ENCODE measurements at regions of chr7 and their contacts with region 1.

Region 1: GRCh38 chr7:15751191-15751701 is 64.8 kb upstream of the MEOX2 start:
- DNase-seq: no peak
- H3K4me3 ChIP-seq: no peak overlapping the region
- H3K27ac ChIP-seq: peak overlapping the region; percentile 67 to 72
- H3K4me1 ChIP-seq: peaks cover 0 to 33% of the 10 kb centered on the region in 2 donors
- H3K27me3 ChIP-seq: no peaks in the 10 kb centered on the region
- CTCF ChIP-seq: no peak

Region 2: DNA sequence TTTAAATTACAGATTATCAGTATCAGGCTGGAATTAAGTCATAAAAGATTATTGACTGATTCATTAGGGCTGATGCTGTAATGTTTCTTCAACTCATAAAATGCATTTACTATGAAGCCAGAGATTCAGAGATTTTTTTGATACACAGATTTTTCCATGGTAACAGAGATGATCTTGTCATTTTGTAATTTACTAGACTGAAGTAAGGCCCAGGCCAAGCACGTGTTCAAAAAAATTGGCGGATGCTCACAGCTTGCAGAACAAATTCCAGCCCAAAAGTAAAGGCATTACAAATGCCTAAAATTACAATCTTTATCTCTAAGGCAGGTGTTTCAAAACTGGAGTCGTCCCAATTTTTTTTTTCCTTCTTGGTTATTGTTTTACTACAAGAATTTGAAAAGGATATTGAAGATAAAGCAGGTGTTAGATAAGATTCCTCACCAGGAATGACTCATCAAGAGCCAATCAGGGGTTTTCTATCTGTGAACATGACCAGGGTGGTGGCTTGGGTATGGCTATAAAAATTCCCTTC is 13.7 kb after region 1 on chr7:
- intact Hi-C with region 1: no loop called
- DNase-seq: no peak
- H3K4me3 ChIP-seq: no peak overlapping the region
- H3K27ac ChIP-seq: peak overlapping the region in 1 of 2 donors; percentile 4
- H3K4me1 ChIP-seq: no peaks in the 10 kb centered on the region
- H3K27me3 ChIP-seq: no peaks in the 10 kb centered on the region
- CTCF ChIP-seq: no peak

Region 3: GRCh38 chr7:16062269-16062668 is 311.0 kb after region 1 on chr7:
- intact Hi-C with region 1: loop called (anchors 10 kb)
- DNase-seq: no peak
- H3K4me3 ChIP-seq: no peak overlapping the region
- H3K27ac ChIP-seq: no peak overlapping the region
- H3K4me1 ChIP-seq: peaks cover 5 to 9% of the 10 kb centered on the region in 2 donors
- H3K27me3 ChIP-seq: no peaks in the 10 kb centered on the region
- CTCF ChIP-seq: no peak

Region 4: GRCh38 chr7:16284581-16284980 is 533.3 kb after region 1 on chr7:
- intact Hi-C with region 1: no loop called
- DNase-seq: no peak
- H3K4me3 ChIP-seq: no peak overlapping the region
- H3K27ac ChIP-seq: no peak overlapping the region
- H3K4me1 ChIP-seq: no peaks in the 10 kb centered on the region
- H3K27me3 ChIP-seq: no peaks in the 10 kb centered on the region
- CTCF ChIP-seq: no peak

Region 5: DNA sequence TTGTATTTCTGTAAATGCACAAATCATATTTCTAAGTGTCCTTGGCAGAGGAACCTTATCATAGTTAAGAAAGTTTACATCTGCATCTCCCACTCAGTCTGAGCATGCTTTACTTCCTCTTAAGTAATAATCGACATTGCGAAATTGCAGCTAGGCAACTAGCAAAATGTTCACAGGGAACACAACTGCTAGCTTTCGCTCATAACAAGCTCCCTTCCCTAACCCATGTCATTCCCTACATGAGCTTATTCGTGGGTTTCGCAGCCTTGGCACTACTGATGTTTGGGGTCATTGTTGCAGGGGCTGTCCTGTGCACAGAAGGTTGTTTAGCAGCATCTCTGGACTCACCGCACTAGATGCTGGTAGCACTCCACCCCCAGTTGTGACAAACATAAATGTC is 1618.8 kb after region 1 on chr7:
- intact Hi-C with region 1: loop called (anchors 10 kb)
- DNase-seq: no peak
- H3K4me3 ChIP-seq: no peak overlapping the region
- H3K27ac ChIP-seq: peak overlapping the region; percentile 60 to 71
- H3K4me1 ChIP-seq: peaks cover 0 to 44% of the 10 kb centered on the region in 2 donors
- H3K27me3 ChIP-seq: no peaks in the 10 kb centered on the region
- CTCF ChIP-seq: no peak